AG04449 (cell line): ENCODE measurements at regions of chr19 and their contacts with region 1.

Region 1: GRCh38 chr19:14031719-14032480 is at the start of gene IL27RA:
- DNase-seq: no peak
- H3K4me3 ChIP-seq: peak within 1 kb of the TSS; percentile 73
- CTCF ChIP-seq: peak; percentile 80

Region 2: DNA sequence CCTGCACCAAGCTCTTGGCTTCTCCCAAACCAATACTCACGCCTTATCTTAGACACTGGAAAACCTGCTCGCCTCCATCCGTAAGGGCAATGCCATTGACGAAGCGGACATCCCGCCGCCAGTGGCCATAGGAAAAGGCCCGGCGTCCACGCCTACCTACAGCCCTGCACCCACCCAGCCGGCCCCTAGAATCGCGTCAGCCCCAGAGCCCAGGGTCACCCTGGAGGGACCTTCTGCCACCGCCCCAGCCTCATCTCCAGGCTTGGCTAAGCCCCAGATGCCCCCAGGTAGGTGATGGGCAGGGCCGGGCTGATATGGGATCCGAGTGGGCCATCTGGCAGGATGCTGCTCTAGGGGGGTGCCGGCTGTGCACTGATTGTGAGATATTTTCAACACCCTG is 118.5 kb before region 1 on chr19:
- CTCF ChIA-PET with region 1: no interaction called
- POLR2A ChIA-PET with region 1: no interaction called
- DNase-seq: no peak
- H3K4me3 ChIP-seq: no peak overlapping the region
- CTCF ChIP-seq: no peak

Region 3: GRCh38 chr19:13952154-13953035 is 79.5 kb before region 1 on chr19 and contains the start of gene DCAF15:
- CTCF ChIA-PET with region 1: no interaction called
- POLR2A ChIA-PET with region 1: no interaction called
- DNase-seq: peak; percentile 98
- H3K4me3 ChIP-seq: peak within 1 kb of the TSS; percentile 78
- CTCF ChIP-seq: no peak

Region 4: DNA sequence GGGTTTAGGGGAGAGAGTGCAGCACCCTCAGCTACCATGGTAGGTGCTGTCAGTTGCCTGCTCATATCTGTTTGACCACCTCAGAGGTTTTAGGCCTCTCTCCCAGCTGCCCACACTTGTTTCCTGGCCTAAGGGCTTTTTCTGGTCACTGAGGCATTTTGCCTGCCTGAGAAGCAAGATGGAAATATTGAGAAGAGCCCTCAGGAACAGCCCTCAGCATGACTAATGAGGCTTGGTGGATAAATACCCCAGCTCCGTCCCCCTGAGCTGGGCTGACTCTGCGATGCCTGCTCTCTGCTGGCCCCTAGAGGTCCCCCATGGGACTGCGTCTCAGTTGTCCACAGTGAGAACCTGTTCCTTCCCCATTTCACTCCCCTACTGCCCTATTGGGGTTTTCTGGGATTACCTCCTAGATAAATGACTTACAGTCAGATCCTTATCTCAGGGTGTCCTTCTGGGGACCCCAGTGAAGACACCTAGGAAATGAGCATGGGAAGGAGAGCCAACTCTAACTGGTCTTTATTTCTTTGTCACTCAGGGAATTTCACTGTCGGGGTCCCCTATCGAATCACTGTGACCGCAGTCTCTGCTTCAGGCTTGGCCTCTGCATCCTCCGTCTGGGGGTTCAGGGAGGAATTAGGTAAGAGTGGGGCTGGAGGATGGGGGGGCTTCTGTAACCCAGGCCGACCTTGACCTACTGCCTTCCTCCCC is 16.7 kb after region 1 on chr19:
- CTCF ChIA-PET with region 1: interaction called, 30 read pairs
- POLR2A ChIA-PET with region 1: no interaction called
- DNase-seq: no peak
- H3K4me3 ChIP-seq: no peak overlapping the region
- CTCF ChIP-seq: peak; percentile 67